ENCODE measurements at regions of chr4 and their contacts with region 1.

Region 1: DNA sequence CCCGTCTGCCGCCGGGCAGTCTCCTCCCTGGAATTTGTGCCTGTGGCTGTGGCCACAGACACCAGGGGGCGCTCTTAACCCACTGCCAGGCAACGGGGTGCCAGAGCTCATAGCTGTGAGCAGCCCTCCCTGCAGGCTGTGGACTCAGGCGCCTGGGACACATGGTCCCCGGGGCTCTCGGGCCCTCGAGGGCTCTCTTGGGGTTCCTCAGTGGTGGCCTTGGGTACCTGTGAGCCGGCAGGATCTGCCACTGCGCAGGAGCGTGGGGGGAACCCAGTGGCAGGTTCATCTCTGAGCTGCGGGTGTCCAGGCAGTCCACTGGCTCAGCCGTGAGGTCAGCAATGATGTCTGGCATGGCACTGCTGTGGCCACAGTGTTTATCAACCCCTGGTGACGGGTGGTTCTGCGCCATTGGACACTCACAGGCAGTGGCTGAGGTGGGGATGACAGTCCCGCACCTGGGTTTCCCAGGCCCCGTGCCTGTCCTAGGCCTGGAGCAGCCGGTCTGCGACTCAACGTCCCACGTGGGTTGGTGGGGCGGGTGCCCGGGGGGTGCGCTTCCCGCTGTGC is 37.2 kb downstream of the PCGF3 start:
- DNase-seq: peak; percentile 93
- H3K4me3 ChIP-seq: no peak overlapping the region; a peak in 1 of 4 replicates
- H3K27ac ChIP-seq: no peak overlapping the region; a peak in 1 of 4 replicates
- H3K4me1 ChIP-seq: no peaks in the 10 kb centered on the region
- H3K27me3 ChIP-seq: no peaks in the 10 kb centered on the region
- CTCF ChIP-seq: peak; percentile 91
- EP300 ChIP-seq: no peak
- RAD21 ChIP-seq: peak; percentile 78

Region 2: DNA sequence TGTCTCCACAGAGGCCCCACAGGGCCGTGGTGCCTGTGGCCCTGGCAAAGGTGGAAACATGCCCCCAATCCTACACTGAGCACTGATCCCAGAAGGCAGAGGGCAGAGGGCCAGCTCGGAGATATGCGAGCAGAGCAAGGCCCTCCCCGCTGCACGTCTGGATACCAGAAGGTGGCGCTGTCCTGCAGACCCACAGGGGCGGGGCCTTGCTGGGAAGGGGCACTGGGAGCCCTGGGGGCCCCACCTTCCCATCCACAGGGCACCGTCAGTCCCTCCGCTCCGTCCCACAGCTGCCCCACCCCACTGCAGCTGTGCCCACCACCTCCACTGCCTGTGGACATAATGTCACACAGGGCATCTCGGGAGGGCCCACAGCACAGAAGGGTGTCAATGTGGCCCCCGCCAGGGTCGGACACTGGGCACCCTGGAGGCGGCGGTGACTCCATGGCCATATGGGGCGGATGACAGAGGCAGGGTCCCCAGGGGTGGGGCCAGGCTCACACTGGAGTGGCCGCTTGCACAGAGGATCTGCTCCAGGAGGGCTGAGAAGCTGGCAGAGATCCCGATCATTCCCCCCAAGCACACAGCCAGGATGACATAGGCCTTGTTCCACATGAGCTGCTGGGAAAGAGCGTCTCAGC is 58.7 kb before region 1 on chr4:
- CTCF ChIA-PET with region 1: interaction called, 11 read pairs
- POLR2A ChIA-PET with region 1: no interaction called
- DNase-seq: peak; percentile 90
- H3K4me3 ChIP-seq: peak overlapping the region in 1 of 2 experiments; percentile 36; a peak in 1 of 4 replicates
- H3K27ac ChIP-seq: peak overlapping the region in 1 of 2 experiments; percentile 62; a peak in 2 of 4 replicates
- H3K4me1 ChIP-seq: peaks cover 13 to 38% of the 10 kb centered on the region in 2 experiments; a peak in 3 of 4 replicates
- H3K27me3 ChIP-seq: no peaks in the 10 kb centered on the region
- CTCF ChIP-seq: peak; percentile 80
- EP300 ChIP-seq: no peak
- RAD21 ChIP-seq: peak; percentile 49

Region 3: GRCh38 chr4:726235-726787 is 16.5 kb before region 1 on chr4:
- CTCF ChIA-PET with region 1: interaction called, 10 read pairs
- POLR2A ChIA-PET with region 1: no interaction called
- DNase-seq: no peak
- H3K4me3 ChIP-seq: no peak overlapping the region
- H3K27ac ChIP-seq: no peak overlapping the region; a peak in 1 of 4 replicates
- H3K4me1 ChIP-seq: peaks cover 0 to 9% of the 10 kb centered on the region in 2 experiments; a peak in 2 of 4 replicates
- H3K27me3 ChIP-seq: no peaks in the 10 kb centered on the region
- CTCF ChIP-seq: no peak
- EP300 ChIP-seq: no peak
- RAD21 ChIP-seq: no peak

Region 4: GRCh38 chr4:762211-763190 is 19.7 kb after region 1 on chr4:
- CTCF ChIA-PET with region 1: interaction called, 18 read pairs
- POLR2A ChIA-PET with region 1: no interaction called
- DNase-seq: peak; percentile 62
- H3K4me3 ChIP-seq: no peak overlapping the region
- H3K27ac ChIP-seq: peak overlapping the region in 1 of 2 experiments; percentile 36; a peak in 1 of 4 replicates
- H3K4me1 ChIP-seq: peaks cover 0 to 4% of the 10 kb centered on the region in 2 experiments; a peak in 1 of 4 replicates
- H3K27me3 ChIP-seq: no peaks in the 10 kb centered on the region
- CTCF ChIP-seq: peak; percentile 39
- EP300 ChIP-seq: no peak
- RAD21 ChIP-seq: peak; percentile 35

Region 5: GRCh38 chr4:986879-987623 is 244.2 kb after region 1 on chr4 and contains the start of gene IDUA:
- CTCF ChIA-PET with region 1: interaction called, 27 read pairs
- POLR2A ChIA-PET with region 1: no interaction called
- DNase-seq: peak; percentile 97
- H3K4me3 ChIP-seq: peak within 1 kb of the TSS; percentile 76 to 85
- H3K27ac ChIP-seq: peak within 1 kb of the TSS; percentile 55 to 82
- H3K4me1 ChIP-seq: peaks cover 10 to 17% of the 10 kb centered on the region in 2 experiments; a peak in 1 of 4 replicates
- H3K27me3 ChIP-seq: no peaks in the 10 kb centered on the region
- CTCF ChIP-seq: peak; percentile 58
- EP300 ChIP-seq: no peak
- RAD21 ChIP-seq: peak; percentile 66
- polyA plus RNA-seq, gene IDUA: 24.4 and 32.1 TPM in 2 replicates

Measured in SK-N-SH (cell line).